ENCODE measurements at regions of chr4 and their contacts with region 1.

Region 1: GRCh38 chr4:107913281-107913899 is 18.0 kb upstream of the CYP2U1 start:
- DNase-seq: peak; percentile 76
- ATAC-seq: peak; percentile 64
- H3K4me3 ChIP-seq: no peak overlapping the region
- H3K27ac ChIP-seq: no peak overlapping the region
- H3K4me1 ChIP-seq: no peaks in the 10 kb centered on the region
- H3K27me3 ChIP-seq: no peaks in the 10 kb centered on the region
- CTCF ChIP-seq: peak; percentile 80

Region 2: DNA sequence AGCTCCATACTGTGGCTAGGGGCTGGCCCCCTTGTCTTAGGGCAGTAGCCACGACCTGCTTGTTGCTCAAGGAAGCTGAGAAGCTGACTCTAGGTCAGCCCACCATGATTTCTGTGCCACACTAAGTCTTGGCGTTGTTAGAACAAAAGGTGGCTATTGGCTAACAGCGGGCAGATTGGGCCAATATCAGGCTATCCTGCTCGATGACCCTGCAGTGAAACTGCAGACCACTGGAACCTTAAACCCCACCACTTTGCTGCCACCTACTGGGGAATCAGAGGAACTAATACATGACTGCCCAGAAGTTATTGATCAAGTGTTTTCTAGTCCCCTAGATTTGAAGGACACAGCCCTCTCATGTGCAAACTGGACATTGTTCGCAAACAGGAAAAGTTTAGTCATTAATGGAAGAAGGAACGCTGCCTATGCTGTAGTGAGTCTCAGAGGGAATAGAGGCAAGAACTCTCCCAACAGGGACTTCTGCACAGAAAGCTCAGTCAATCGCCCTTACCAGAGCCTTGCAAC is 176.4 kb before region 1 on chr4:
- CTCF ChIA-PET with region 1: interaction called, 10 read pairs
- POLR2A ChIA-PET with region 1: no interaction called
- intact Hi-C with region 1: no loop called
- DNase-seq: peak; percentile 54
- ATAC-seq: peak; percentile 71
- H3K4me3 ChIP-seq: no peak overlapping the region
- H3K27ac ChIP-seq: no peak overlapping the region
- H3K4me1 ChIP-seq: no peaks in the 10 kb centered on the region
- H3K27me3 ChIP-seq: no peaks in the 10 kb centered on the region
- CTCF ChIP-seq: peak; percentile 83

Region 3: GRCh38 chr4:107757864-107758476 is 155.4 kb before region 1 on chr4:
- CTCF ChIA-PET with region 1: no interaction called
- POLR2A ChIA-PET with region 1: no interaction called
- intact Hi-C with region 1: loop called (anchors 1 kb)
- DNase-seq: peak; percentile 61
- ATAC-seq: no peak
- H3K4me3 ChIP-seq: no peak overlapping the region
- H3K27ac ChIP-seq: no peak overlapping the region
- H3K4me1 ChIP-seq: no peaks in the 10 kb centered on the region
- H3K27me3 ChIP-seq: no peaks in the 10 kb centered on the region
- CTCF ChIP-seq: peak; percentile 64

Region 4: GRCh38 chr4:107853444-107854355 is 59.7 kb before region 1 on chr4:
- CTCF ChIA-PET with region 1: no interaction called
- POLR2A ChIA-PET with region 1: no interaction called
- intact Hi-C with region 1: loop called (anchors 5 kb)
- DNase-seq: peak; percentile 60
- ATAC-seq: peak; percentile 69
- H3K4me3 ChIP-seq: peak overlapping the region; percentile 22; the same call in 1 of the 2 replicates
- H3K27ac ChIP-seq: peak overlapping the region; percentile 51
- H3K4me1 ChIP-seq: peaks cover 21% of the 10 kb centered on the region
- H3K27me3 ChIP-seq: no peaks in the 10 kb centered on the region
- CTCF ChIP-seq: no peak